Endothelial cell of umbilical vein (primary cell): ENCODE measurements at regions of chr14 and their contacts with region 1.

Region 1: DNA sequence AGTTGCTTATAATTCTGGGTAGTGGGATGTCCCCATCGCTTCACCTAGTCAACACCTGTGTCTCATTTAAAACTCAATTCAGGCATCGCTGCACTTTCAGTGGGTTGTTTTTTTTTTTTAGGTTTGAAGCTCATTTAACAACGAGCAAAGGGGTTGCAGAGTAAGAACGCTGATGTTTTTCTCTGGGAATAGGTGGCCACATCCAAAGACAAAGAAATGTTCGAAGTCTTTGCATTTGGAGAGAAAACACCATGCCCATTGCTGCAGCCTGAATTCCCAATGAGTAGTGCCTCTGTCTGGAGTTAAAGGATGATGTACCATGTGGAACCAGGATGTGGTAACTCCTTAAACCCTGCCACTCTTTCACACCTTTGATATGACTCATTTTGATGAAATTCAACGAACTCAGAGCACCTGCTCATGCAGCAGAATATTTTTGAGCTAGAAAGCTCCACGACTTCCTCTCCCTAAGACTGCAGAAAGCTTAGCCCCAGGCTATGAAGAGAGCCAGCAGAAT is 35.1 kb upstream of the BATF start:
- DNase-seq: no peak
- H3K4me3 ChIP-seq: no peak overlapping the region
- H3K27ac ChIP-seq: no peak overlapping the region
- H3K4me1 ChIP-seq: no peaks in the 10 kb centered on the region
- H3K27me3 ChIP-seq: peaks cover 9 to 10% of the 10 kb centered on the region in 2 experiments
- CTCF ChIP-seq: no peak
- POLR2A ChIP-seq: no peak

Region 2: GRCh38 chr14:75307700-75308379 is 179.4 kb before region 1 on chr14:
- CTCF ChIA-PET with region 1: interaction called, 141 read pairs
- POLR2A ChIA-PET with region 1: no interaction called
- dilution Hi-C with region 1: no loop called
- intact Hi-C with region 1: loop called (anchors 1 kb)
- DNase-seq: peak; percentile 77
- H3K4me3 ChIP-seq: no peak overlapping the region
- H3K27ac ChIP-seq: no peak overlapping the region
- H3K4me1 ChIP-seq: peaks cover 3% of the 10 kb centered on the region
- H3K27me3 ChIP-seq: peaks cover 0 to 2% of the 10 kb centered on the region in 2 experiments
- CTCF ChIP-seq: peak; percentile 91 to 93
- POLR2A ChIP-seq: no peak

Region 3: DNA sequence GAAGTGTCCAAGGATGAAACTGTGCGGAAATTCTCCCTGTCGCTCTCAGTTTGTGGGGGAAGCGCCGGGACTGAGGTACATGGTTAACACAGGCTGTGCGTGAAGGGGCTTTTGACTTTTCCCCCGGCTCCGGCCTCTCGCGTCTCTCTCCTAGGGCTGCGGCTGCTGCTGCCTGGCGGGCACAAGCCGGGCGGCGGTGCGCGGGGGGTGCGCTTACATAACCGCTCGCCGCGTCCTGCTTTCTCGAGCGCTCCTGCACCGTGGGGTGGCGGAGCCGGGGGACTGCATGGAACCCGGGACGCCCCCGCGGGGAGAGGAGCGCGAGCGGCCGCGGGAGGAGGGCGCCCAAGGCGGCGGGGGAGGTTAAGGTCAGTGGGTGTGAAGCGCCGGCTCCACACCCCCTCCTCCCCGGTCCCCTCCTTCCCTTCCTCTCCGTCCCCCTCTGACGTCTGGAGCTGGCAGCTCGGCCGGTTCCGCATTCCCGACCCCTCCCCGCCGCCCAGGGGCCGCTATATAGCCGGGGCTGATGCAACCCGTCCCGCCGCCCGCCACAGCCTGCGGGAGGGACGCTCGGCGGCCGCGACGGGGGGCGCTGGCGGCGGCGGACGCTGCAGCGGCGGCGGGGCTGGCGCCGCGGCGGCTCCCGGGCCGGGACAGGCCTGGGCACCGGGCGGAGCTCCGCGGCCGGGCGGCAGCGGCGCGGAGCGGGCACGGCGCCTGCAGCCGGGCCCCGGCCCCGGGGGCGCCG is 59.6 kb before region 1 on chr14 and contains the start of gene JDP2:
- CTCF ChIA-PET with region 1: interaction called, 7 read pairs
- POLR2A ChIA-PET with region 1: no interaction called
- dilution Hi-C with region 1: no loop called
- intact Hi-C with region 1: loop called (anchors 5 kb)
- DNase-seq: peak; percentile 57
- H3K4me3 ChIP-seq: peak within 1 kb of the TSS; percentile 46 to 72 (median 52)
- H3K27ac ChIP-seq: no peak within 1 kb of the TSS
- H3K4me1 ChIP-seq: no peaks in the 10 kb centered on the region
- H3K27me3 ChIP-seq: peaks cover 15 to 22% of the 10 kb centered on the region in 2 experiments
- CTCF ChIP-seq: peak in 1 of 2 donors; percentile 0
- POLR2A ChIP-seq: peak; percentile 35
- total RNA-seq, gene JDP2: 10.6 and 10.8 TPM in 2 replicates

Region 4: GRCh38 chr14:75499084-75499875 is 12.1 kb after region 1 on chr14:
- CTCF ChIA-PET with region 1: interaction called, 24 read pairs
- POLR2A ChIA-PET with region 1: no interaction called
- dilution Hi-C with region 1: no loop called
- intact Hi-C with region 1: no loop called
- DNase-seq: no peak
- H3K4me3 ChIP-seq: no peak overlapping the region
- H3K27ac ChIP-seq: no peak overlapping the region
- H3K4me1 ChIP-seq: no peaks in the 10 kb centered on the region
- H3K27me3 ChIP-seq: no peaks in the 10 kb centered on the region
- CTCF ChIP-seq: no peak
- POLR2A ChIP-seq: no peak

Region 5: GRCh38 chr14:75542588-75543091 is 55.4 kb after region 1 on chr14:
- CTCF ChIA-PET with region 1: interaction called, 11 read pairs
- POLR2A ChIA-PET with region 1: no interaction called
- dilution Hi-C with region 1: no loop called
- intact Hi-C with region 1: no loop called
- DNase-seq: no peak
- H3K4me3 ChIP-seq: no peak overlapping the region
- H3K27ac ChIP-seq: no peak overlapping the region
- H3K4me1 ChIP-seq: no peaks in the 10 kb centered on the region
- H3K27me3 ChIP-seq: no peaks in the 10 kb centered on the region
- CTCF ChIP-seq: no peak
- POLR2A ChIP-seq: no peak

Region 6: DNA sequence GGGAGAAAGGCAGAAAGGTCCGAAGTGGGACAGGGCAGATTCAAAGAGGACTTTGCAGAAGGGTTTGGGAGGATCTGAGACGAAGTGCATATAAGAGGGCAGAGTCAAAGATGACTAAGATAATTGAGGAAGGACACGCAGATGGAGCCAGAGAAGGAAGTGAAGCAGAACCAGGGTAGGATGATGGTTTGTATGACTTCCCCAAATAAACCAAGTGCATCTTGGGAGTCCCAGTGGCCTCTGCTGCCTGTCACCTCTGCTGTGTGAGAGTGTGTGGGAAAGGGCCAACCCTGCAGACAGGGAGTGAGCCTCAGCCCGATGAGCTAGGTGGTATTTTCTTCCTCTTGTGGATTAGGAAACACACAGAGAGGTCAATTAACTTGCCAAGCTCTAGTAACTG is 128.0 kb after region 1 on chr14:
- CTCF ChIA-PET with region 1: no interaction called
- POLR2A ChIA-PET with region 1: no interaction called
- dilution Hi-C with region 1: no loop called
- intact Hi-C with region 1: no loop called
- DNase-seq: no peak
- H3K4me3 ChIP-seq: no peak overlapping the region
- H3K27ac ChIP-seq: no peak overlapping the region
- H3K4me1 ChIP-seq: no peaks in the 10 kb centered on the region
- H3K27me3 ChIP-seq: peaks cover 5 to 13% of the 10 kb centered on the region in 2 experiments
- CTCF ChIP-seq: no peak
- POLR2A ChIP-seq: no peak